Naive thymus-derived CD4-positive, alpha-beta T cell (primary cell): ENCODE measurements at regions of chr7 and their contacts with region 1.

Region 1: DNA sequence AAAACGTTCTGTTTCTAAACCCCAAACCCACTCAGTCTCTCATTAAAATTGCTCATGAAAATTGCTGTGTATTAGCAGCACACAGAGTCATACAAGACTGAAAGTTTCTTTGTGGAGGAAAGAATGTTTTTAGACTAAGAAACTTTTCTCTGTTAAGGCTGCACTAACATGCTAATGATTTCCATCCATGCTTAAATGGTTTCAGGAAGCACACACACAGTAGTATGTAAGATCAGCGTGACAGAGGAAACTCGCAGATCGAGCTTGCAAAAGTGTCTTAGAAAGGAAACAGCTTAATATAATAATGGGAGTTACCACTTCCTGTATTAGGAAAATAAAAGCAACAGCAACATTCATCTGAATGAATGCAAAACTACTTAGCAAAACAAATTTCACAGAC is 112.7 kb downstream of the ICA1 start:
- DNase-seq: peak in 1 of 9 donors; percentile 28
- ATAC-seq: peak; percentile 66
- H3K4me3 ChIP-seq: no peak overlapping the region
- H3K4me3 Mint-ChIP-seq: peak overlapping the region in 9 of 10 donors; percentile 7 to 71 (median 48)
- H3K27ac ChIP-seq: peak overlapping the region; percentile 3
- H3K27ac Mint-ChIP-seq: peak overlapping the region in 8 of 9 donors; percentile 42 to 81 (median 76)
- H3K4me1 ChIP-seq: peaks cover 7 to 14% of the 10 kb centered on the region in 2 donors
- H3K4me1 Mint-ChIP-seq: peaks cover 21 to 78% (median 70%) of the 10 kb centered on the region in 7 donors
- H3K27me3 ChIP-seq: no peaks in the 10 kb centered on the region
- H3K27me3 Mint-ChIP-seq: no peaks in the 10 kb centered on the region

Region 2: DNA sequence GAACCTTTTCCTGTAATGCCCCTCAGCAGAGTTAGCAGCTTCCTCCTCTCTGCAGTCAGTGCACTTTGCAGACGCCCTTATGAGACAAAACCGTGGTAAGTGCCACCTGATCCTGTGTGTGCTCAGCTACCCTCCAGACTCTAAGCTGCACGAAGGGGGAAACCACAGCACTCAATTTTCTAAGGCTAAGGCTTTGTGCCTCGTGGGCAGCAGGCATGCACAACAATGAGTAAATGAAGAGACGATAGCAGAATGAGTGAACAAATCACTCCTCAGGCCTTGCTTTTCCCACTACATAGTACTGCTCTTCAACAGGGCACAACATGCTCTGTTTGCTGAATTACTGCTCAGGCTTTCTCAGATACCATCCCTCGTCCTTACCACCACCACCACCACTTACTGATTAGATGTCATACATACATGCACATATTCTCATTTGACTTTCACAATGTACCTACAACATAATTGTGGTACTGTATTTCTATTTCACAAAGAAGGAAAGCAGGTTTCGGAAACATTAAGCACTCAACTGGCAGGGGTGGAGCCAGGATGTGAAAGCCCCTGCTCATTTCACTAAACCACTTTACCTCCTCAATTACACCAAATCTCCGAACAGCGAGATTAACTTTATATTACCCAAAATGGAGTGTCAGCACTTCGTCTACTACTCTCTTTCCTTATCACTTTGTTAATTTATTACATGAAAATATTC is 27.3 kb after region 1 on chr7:
- CTCF ChIA-PET with region 1: no interaction called
- POLR2A ChIA-PET with region 1: interaction called, 8 read pairs
- intact Hi-C with region 1: loop called in 1 of 2 experiments (anchors 1 kb)
- DNase-seq: peak; percentile 20 to 74 (median 70)
- ATAC-seq: peak; percentile 91
- H3K4me3 ChIP-seq: peak overlapping the region; percentile 44
- H3K4me3 Mint-ChIP-seq: peak overlapping the region; percentile 73 to 86 (median 77)
- H3K27ac ChIP-seq: peak overlapping the region; percentile 72
- H3K27ac Mint-ChIP-seq: peak overlapping the region; percentile 88 to 97 (median 96)
- H3K4me1 ChIP-seq: peaks cover 48 to 50% of the 10 kb centered on the region in 2 donors
- H3K4me1 Mint-ChIP-seq: peaks cover 36 to 70% (median 67%) of the 10 kb centered on the region in 7 donors
- H3K27me3 ChIP-seq: no peaks in the 10 kb centered on the region
- H3K27me3 Mint-ChIP-seq: no peaks in the 10 kb centered on the region